CD4-positive, alpha-beta memory T cell (primary cell): ENCODE measurements at regions of chr2 and their contacts with region 1.

Region 1: DNA sequence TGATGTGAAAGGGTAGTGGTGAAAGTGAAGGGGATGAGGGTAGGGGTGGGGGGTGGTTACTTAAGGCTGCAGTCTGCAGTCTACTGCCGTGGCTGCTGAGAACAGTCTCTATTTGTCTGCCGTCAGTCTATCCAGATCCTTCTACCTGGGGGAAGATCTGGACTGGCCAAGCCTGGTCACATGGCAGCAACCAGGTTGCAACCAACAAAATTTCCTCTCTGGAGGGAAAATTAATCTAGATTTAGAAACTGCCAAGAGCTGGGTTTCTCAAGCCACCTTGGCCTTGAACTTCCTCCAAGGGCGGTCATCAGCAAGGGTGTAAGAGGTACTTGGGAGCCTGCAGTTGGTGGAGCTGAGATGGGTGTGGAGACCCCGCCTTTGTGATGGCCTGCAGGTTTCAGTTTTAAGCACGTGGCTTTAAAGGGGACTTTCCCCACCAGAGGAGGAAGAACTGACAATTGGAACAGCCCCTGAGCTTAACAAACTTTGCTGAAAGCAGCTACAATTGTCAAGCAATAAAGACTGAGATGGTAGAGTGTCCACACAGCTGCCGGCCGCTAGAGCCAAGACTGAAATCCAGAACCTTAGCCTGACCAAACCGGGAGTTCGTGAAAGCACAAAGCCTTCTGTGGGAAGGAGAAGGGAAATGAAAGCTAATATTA is 31.4 kb upstream of the KCMF1 start:
- DNase-seq: peak; percentile 79 to 91 (median 83)
- H3K4me3 ChIP-seq: peak overlapping the region; percentile 34 to 45
- H3K4me3 Mint-ChIP-seq: peak overlapping the region; percentile 76 to 89 (median 87)
- H3K27ac ChIP-seq: peak overlapping the region; percentile 82
- H3K27ac Mint-ChIP-seq: peak overlapping the region; percentile 95 to 99 (median 98)
- H3K4me1 ChIP-seq: peaks cover 24% of the 10 kb centered on the region
- H3K4me1 Mint-ChIP-seq: peaks cover 15 to 34% (median 28%) of the 10 kb centered on the region in 4 donors
- H3K27me3 ChIP-seq: no peaks in the 10 kb centered on the region
- H3K27me3 Mint-ChIP-seq: no peaks in the 10 kb centered on the region

Region 2: DNA sequence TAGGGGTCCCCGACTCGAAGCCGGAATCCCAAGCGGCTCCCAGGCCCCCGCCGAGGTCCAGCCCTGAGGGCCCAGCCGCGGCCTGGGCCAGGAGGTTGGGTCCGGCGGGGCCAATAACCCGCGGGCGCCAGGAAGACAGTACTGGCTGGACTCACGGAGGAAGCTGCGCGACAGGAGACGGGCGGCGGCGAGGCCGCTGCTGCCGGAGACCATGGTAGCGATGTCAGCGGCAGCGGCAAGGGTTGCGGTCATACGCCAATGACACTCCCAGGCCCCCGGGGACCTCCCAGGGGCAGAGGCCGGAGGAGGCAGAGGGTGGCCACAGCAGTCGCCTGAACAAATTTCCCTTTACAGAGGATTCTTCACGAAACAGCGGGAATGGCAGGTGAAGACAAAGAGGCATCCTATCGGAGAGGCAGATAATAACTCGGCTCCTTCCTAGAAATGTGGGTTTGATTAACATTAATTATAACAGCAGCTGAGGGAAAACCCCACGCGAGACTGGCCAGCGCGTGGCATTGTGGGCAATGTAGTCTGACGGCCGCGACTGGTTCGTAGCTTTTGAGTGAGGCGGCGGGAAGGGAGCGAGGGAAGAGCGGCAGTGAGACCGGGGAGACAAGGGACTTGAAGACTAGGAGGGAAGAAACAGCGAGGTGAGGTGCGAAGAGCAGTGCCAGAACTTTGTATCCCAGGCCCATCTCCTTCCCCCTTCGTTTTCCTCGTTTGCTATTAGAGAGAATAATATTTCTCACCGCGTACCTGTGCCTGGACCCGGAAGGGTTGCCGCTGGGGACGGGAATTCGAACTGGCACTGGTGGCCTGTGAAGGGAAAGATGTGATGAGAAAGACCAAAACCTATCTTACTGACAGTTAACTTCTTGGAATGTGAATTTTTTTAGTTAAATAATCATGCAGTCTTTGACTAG is 480.3 kb before region 1 on chr2 and contains the start of gene SUCLG1:
- CTCF ChIA-PET with region 1: no interaction called
- POLR2A ChIA-PET with region 1: interaction called, 3 read pairs
- intact Hi-C with region 1: loop called (anchors 1 kb)
- DNase-seq: peak; percentile 89 to 92 (median 90)
- H3K4me3 ChIP-seq: peak within 1 kb of the TSS; percentile 68 to 76
- H3K4me3 Mint-ChIP-seq: peak within 1 kb of the TSS; percentile 90 to 99 (median 91)
- H3K27ac ChIP-seq: peak within 1 kb of the TSS; percentile 77
- H3K27ac Mint-ChIP-seq: peak within 1 kb of the TSS; percentile 89 to 99 (median 98)
- H3K4me1 ChIP-seq: peaks cover 39% of the 10 kb centered on the region
- H3K4me1 Mint-ChIP-seq: peaks cover 36 to 49% (median 43%) of the 10 kb centered on the region in 4 donors
- H3K27me3 ChIP-seq: no peaks in the 10 kb centered on the region
- H3K27me3 Mint-ChIP-seq: no peaks in the 10 kb centered on the region
- total RNA-seq, gene SUCLG1: 46.5 to 46.6 TPM

Region 3: DNA sequence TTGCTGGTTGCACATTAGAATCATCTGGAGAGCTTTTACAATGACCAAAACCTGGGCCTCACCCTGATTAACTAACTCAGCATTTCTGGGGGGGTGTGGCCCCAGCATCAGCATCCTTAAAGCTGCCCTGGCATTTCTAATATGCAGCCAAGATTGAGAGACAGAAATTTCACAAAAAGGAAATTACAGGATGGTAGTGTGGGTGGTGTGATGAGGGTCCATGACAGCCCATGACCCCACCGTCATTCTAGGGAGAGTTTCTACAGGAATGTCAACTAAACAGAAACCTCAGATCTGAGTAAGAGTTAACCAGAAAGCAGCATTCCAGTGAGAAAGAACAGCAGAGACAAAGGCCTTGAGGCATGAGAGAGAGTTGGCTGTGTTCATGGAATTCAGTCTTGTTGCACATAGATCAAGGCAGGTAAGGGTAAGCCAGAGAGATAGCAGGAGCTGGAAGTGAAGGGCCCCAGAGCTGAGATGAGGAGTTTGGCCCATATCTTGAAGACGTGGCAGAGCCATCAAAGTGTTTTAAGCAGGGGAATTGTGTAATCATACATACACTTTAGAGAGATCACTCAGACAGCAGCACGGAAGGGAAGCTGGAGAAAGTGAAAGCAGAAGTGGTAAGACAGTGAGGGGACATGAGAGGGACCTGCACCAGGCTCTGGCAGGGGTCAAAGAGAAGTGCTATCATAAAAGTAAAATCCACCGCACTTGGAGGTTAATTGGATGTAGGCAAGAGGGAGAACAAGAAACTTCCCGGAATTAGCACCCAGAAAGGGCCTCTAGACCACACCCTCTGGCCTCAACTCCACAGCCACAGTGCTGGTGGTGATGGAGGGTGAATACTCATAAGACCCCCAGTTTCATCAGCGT is 50.9 kb before region 1 on chr2:
- CTCF ChIA-PET with region 1: interaction called, 9 read pairs
- POLR2A ChIA-PET with region 1: interaction called, 16 read pairs
- intact Hi-C with region 1: no loop called
- DNase-seq: peak; percentile 62 to 69 (median 66)
- H3K4me3 ChIP-seq: peak overlapping the region; percentile 32 to 42
- H3K4me3 Mint-ChIP-seq: peak overlapping the region; percentile 72 to 90 (median 82)
- H3K27ac ChIP-seq: peak overlapping the region; percentile 81
- H3K27ac Mint-ChIP-seq: peak overlapping the region; percentile 90 to 99 (median 97)
- H3K4me1 ChIP-seq: peaks cover 23% of the 10 kb centered on the region
- H3K4me1 Mint-ChIP-seq: peaks cover 22 to 43% (median 38%) of the 10 kb centered on the region in 4 donors
- H3K27me3 ChIP-seq: no peaks in the 10 kb centered on the region
- H3K27me3 Mint-ChIP-seq: no peaks in the 10 kb centered on the region

Region 4: GRCh38 chr2:84959045-84959493 is 19.5 kb after region 1 on chr2:
- CTCF ChIA-PET with region 1: interaction called, 3 read pairs
- POLR2A ChIA-PET with region 1: interaction called, 10 read pairs
- intact Hi-C with region 1: no loop called
- DNase-seq: no peak
- H3K4me3 ChIP-seq: no peak overlapping the region
- H3K4me3 Mint-ChIP-seq: no peak overlapping the region
- H3K27ac ChIP-seq: no peak overlapping the region
- H3K27ac Mint-ChIP-seq: peak overlapping the region in 5 of 7 donors; percentile 10 to 81 (median 55)
- H3K4me1 ChIP-seq: peaks cover 6% of the 10 kb centered on the region
- H3K4me1 Mint-ChIP-seq: peaks cover 15 to 32% (median 24%) of the 10 kb centered on the region in 4 donors
- H3K27me3 ChIP-seq: no peaks in the 10 kb centered on the region
- H3K27me3 Mint-ChIP-seq: no peaks in the 10 kb centered on the region

Region 5: GRCh38 chr2:84970868-84971509 is 31.4 kb after region 1 on chr2 and contains the start of gene KCMF1:
- CTCF ChIA-PET with region 1: interaction called, 9 read pairs
- POLR2A ChIA-PET with region 1: interaction called, 195 read pairs
- intact Hi-C with region 1: loop called (anchors 1 kb)
- DNase-seq: peak; percentile 64 to 79 (median 71)
- H3K4me3 ChIP-seq: peak within 1 kb of the TSS; percentile 63 to 90
- H3K4me3 Mint-ChIP-seq: peak within 1 kb of the TSS; percentile 93 to 100 (median 99)
- H3K27ac ChIP-seq: peak within 1 kb of the TSS; percentile 93
- H3K27ac Mint-ChIP-seq: peak within 1 kb of the TSS; percentile 97 to 100 (median 99)
- H3K4me1 ChIP-seq: peaks cover 59% of the 10 kb centered on the region
- H3K4me1 Mint-ChIP-seq: peaks cover 41 to 73% (median 56%) of the 10 kb centered on the region in 4 donors
- H3K27me3 ChIP-seq: no peaks in the 10 kb centered on the region
- H3K27me3 Mint-ChIP-seq: peaks cover 0 to 2% of the 10 kb centered on the region in 2 donors
- total RNA-seq, gene KCMF1: 59.8 to 62.7 TPM

Region 6: DNA sequence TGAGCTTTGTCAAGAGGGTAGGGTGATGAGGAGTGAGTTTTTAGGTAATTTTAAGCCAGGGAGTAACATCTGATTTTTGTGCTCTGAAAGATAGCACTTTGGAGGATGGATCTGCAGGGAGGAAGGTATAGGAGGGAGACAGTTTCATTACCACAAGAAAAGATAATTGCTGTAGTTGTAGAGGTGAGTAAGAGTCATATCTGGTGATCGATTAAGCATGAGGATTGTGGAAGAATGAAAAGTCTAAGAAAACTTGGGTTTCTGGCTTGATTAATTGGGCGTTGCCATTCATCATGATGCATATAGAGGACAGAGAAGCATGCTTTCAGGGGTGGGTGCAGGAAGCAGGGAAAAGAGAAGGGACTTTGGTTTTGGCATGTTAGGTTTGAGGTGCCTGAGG is 49.9 kb after region 1 on chr2:
- CTCF ChIA-PET with region 1: no interaction called
- POLR2A ChIA-PET with region 1: no interaction called
- intact Hi-C with region 1: no loop called
- DNase-seq: no peak
- H3K4me3 ChIP-seq: no peak overlapping the region
- H3K4me3 Mint-ChIP-seq: no peak overlapping the region
- H3K27ac ChIP-seq: no peak overlapping the region
- H3K27ac Mint-ChIP-seq: no peak overlapping the region
- H3K4me1 ChIP-seq: peaks cover 76% of the 10 kb centered on the region
- H3K4me1 Mint-ChIP-seq: peaks cover 31 to 46% (median 38%) of the 10 kb centered on the region in 4 donors
- H3K27me3 ChIP-seq: no peaks in the 10 kb centered on the region
- H3K27me3 Mint-ChIP-seq: no peaks in the 10 kb centered on the region

Region 7: DNA sequence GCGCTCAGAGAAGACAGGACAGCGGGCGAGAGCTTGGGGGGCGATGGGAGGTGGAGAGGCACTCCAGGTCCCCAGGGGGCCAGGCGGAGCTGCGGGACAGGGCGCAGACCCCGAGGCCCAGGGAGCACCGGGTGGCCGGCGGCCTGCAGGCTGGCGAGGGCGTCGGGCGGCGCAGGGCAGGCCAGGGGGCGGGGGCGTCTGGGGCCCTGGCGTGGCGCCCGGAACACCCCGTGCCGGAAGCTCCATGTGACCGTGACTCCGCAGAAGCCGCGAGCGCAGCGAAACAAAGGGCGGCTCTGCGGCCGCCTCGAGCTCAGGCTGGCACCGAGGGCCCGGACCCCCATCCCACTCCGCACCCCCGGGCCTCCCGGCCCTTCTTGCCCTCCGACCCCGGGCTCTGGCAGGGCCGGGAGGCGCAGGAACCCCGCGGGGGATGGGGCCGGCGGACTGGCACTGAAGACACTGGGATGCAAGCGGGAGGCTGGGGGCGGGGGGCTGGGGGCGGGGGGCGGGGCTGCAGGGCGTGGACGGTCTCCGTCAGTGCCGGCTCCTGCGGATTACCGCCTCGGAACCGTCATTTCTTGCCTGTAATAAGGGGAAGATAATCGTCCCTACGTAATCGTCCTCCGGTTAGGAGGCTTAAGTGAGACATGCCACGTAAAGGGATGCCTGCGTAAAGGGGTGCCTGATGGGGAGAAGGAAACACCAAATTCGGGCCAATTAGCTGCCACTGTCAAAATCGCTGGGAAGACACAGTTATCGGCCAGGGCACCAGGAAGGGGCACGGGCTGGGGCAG is 498.1 kb after region 1 on chr2:
- CTCF ChIA-PET with region 1: no interaction called
- POLR2A ChIA-PET with region 1: no interaction called
- intact Hi-C with region 1: no loop called
- DNase-seq: peak; percentile 77 to 88 (median 81)
- H3K4me3 ChIP-seq: peak overlapping the region; percentile 36 to 52
- H3K4me3 Mint-ChIP-seq: peak overlapping the region; percentile 87 to 95 (median 91)
- H3K27ac ChIP-seq: peak overlapping the region; percentile 75
- H3K27ac Mint-ChIP-seq: peak overlapping the region; percentile 88 to 99 (median 98)
- H3K4me1 ChIP-seq: peaks cover 30% of the 10 kb centered on the region
- H3K4me1 Mint-ChIP-seq: peaks cover 9 to 38% (median 25%) of the 10 kb centered on the region in 4 donors
- H3K27me3 ChIP-seq: no peaks in the 10 kb centered on the region
- H3K27me3 Mint-ChIP-seq: no peaks in the 10 kb centered on the region